ENCODE measurements at regions of chr4 and their contacts with region 1.

Region 1: DNA sequence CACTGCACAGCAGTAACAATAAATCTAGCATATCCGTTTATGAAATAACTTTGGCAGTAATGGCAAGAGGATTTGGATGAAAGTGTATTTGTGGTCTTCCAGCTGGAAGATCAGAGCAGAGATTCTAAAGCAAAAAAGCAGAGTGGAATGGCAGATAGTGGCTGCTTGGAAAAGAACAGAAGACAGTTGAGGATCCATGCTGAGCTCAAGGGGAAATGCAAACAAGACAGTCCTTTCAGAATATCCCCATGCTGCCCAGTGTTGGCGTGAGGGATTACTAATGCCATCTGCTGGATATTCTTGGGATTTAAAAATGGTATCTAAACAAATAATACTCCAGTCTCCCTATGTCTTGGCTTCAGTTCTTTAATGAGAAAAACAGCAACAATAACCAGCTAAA is 629.1 kb upstream of the ATOH1 start:
- DNase-seq: peak; percentile 28
- H3K4me3 ChIP-seq: no peak overlapping the region
- H3K27ac ChIP-seq: no peak overlapping the region
- H3K4me1 ChIP-seq: no peaks in the 10 kb centered on the region
- H3K27me3 ChIP-seq: no peaks in the 10 kb centered on the region
- CTCF ChIP-seq: peak; percentile 46 to 63

Region 2: DNA sequence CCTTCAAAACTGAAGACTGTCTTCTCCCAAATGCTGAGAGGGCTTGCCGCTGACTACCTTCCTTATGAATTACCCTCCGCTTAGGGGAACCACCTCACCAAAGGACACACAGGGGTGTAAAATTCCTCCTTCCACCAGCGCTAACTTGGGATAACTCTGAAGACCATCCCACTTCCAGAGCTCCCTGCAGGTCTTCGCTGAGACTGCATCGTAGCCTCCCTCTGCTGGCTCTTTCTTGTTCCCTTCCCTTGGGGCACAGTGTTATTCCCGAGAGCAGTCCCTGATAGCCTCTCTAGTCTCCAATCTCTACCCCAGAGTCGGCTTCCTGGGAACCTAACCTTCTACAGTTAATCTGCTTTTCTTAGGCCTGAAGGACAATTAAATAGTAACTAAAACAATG is 96.5 kb before region 1 on chr4:
- CTCF ChIA-PET with region 1: no interaction called
- dilution Hi-C with region 1: no loop called
- in situ Hi-C with region 1: no loop called
- intact Hi-C with region 1: no loop called
- DNase-seq: no peak
- H3K4me3 ChIP-seq: no peak overlapping the region
- H3K27ac ChIP-seq: no peak overlapping the region
- H3K4me1 ChIP-seq: no peaks in the 10 kb centered on the region
- H3K27me3 ChIP-seq: no peaks in the 10 kb centered on the region
- CTCF ChIP-seq: no peak

Region 3: GRCh38 chr4:93157994-93158393 is 41.5 kb before region 1 on chr4:
- CTCF ChIA-PET with region 1: no interaction called
- dilution Hi-C with region 1: no loop called
- in situ Hi-C with region 1: no loop called
- intact Hi-C with region 1: loop called (anchors 5 kb)
- DNase-seq: no peak
- H3K4me3 ChIP-seq: no peak overlapping the region
- H3K27ac ChIP-seq: no peak overlapping the region
- H3K4me1 ChIP-seq: no peaks in the 10 kb centered on the region
- H3K27me3 ChIP-seq: peaks cover 2% of the 10 kb centered on the region
- CTCF ChIP-seq: peak; percentile 24 to 62

Region 4: DNA sequence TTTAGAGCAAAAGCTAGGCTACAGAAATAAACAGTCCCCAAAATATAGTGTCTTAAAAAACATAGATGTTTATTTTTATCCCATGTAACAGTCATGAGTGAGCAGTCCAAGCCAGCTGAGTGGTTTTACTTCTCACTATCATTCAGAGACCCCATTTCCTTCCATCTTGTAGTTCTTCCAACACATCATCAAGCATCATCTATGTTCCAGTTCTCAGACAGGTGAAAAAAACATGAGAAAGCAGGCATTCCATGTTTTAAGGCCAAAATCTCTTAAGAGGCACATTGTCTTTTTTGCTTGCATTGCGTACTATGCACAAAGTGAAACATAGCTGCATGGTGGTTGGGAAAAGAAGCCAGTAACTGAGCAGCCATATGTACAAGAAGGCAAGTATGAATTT is 757.7 kb after region 1 on chr4:
- CTCF ChIA-PET with region 1: no interaction called
- dilution Hi-C with region 1: no loop called
- in situ Hi-C with region 1: no loop called
- intact Hi-C with region 1: no loop called
- DNase-seq: no peak
- H3K4me3 ChIP-seq: no peak overlapping the region
- H3K27ac ChIP-seq: no peak overlapping the region
- H3K4me1 ChIP-seq: no peaks in the 10 kb centered on the region
- H3K27me3 ChIP-seq: no peaks in the 10 kb centered on the region
- CTCF ChIP-seq: no peak

Measured in mammary epithelial cell (primary cell).